HEK293T (cell line): ENCODE measurements at regions of chrX and their contacts with region 1.

Region 1: GRCh38 chrX:68710870-68711576 is 63.6 kb downstream of the STARD8 start:
- DNase-seq: peak; percentile 74

Region 2: DNA sequence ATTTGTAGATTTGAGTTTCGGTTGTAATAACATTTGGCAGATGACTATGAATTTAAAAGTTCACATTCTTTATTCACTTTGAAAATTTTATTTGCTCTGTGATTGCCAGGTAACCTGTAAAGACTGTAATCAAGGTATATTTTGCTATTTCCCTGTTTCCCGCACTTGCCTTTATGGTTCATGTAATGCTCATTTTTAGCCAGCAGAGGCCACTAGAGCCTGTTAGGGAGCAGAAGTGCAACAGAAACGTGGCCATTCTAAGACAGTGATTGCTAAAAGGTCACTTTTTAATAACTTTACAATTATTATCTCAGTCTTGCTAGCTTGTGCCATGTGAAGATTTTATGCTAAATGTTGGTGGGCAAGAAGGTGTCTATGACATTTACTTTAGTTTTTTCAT is 199.8 kb before region 1 on chrX:
- CTCF ChIA-PET with region 1: interaction called, 12 read pairs
- POLR2A ChIA-PET with region 1: no interaction called
- DNase-seq: peak; percentile 61

Region 3: DNA sequence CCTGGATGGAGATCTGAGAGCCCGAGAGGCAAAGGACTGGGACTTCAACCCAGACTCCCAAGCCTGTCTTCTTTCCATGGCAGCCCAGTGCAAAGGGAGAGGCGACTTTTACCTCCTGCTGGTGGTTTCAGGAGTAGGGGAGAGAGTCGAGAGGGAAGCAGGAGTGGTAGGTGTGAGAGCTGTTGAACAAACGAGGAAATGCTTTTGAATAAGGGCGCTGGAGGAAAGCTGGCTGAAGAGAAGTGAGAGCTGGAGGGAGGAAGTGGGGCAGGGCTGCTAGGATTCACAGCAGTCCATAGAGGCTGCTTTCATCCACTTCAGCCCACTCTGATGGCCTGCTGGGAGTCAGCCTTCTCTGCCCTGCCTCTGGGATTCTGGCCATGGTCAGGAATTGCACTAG is 36.0 kb after region 1 on chrX:
- CTCF ChIA-PET with region 1: no interaction called
- POLR2A ChIA-PET with region 1: no interaction called
- DNase-seq: no peak